ENCODE measurements at regions of chr7 and their contacts with region 1.

Region 1: DNA sequence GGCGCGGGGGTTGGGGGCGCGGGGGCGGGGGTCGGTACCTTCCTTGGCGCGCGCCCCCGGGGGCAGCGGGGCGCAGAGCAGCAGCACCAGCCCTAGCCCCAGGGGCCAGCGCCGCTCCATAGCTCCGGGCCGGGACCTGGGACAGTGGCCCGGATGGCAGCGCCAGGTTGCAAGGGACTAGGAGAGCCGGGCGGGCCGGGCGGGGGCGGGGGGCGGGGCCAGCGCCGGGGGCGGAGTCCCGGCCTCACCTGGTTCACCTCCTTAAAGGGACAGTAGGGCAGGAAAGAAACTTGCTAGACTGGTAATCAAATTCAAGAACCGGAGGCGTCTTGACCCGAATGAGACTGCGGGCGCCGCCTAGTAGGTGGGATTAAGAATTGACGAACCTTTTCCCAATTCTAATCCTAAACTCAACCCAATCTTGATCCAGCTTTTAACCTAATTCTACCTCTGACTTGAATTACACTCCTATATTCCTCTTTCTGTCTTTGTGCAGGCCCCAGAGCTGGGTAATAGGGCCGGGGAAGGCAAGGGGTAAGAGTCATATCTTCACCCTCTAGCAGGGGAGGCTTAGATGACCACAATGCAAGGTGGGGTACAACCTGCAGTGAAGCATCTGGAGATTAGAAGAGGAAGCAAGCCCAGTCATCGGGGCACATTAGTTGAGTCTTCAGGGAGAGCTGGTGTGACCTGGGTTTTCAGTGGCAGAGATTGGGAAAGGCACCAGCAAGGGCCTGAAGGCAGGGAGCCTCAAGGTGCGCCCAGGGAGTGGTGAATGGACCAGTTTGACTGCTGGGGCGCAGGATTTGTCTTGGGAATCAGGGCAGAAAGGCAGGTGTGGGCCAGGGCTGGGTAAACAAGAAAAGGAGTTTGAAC is at the start of gene EPHA1:
- DNase-seq: peak; percentile 30 to 85 (median 50)
- ATAC-seq: peak; percentile 74
- H3K4me3 ChIP-seq: peak within 1 kb of the TSS; percentile 71
- H3K4me3 Mint-ChIP-seq: peak within 1 kb of the TSS; percentile 94
- H3K27ac ChIP-seq: peak within 1 kb of the TSS; percentile 13 to 38
- H3K27ac Mint-ChIP-seq: peak within 1 kb of the TSS; percentile 85
- H3K4me1 ChIP-seq: peaks cover 55% of the 10 kb centered on the region
- H3K4me1 Mint-ChIP-seq: peaks cover 87% of the 10 kb centered on the region
- H3K27me3 ChIP-seq: no peaks in the 10 kb centered on the region
- H3K27me3 Mint-ChIP-seq: no peaks in the 10 kb centered on the region
- CTCF ChIP-seq: peak; percentile 59
- total RNA-seq, gene EPHA1: 16.0 to 19.0 TPM

Region 2: DNA sequence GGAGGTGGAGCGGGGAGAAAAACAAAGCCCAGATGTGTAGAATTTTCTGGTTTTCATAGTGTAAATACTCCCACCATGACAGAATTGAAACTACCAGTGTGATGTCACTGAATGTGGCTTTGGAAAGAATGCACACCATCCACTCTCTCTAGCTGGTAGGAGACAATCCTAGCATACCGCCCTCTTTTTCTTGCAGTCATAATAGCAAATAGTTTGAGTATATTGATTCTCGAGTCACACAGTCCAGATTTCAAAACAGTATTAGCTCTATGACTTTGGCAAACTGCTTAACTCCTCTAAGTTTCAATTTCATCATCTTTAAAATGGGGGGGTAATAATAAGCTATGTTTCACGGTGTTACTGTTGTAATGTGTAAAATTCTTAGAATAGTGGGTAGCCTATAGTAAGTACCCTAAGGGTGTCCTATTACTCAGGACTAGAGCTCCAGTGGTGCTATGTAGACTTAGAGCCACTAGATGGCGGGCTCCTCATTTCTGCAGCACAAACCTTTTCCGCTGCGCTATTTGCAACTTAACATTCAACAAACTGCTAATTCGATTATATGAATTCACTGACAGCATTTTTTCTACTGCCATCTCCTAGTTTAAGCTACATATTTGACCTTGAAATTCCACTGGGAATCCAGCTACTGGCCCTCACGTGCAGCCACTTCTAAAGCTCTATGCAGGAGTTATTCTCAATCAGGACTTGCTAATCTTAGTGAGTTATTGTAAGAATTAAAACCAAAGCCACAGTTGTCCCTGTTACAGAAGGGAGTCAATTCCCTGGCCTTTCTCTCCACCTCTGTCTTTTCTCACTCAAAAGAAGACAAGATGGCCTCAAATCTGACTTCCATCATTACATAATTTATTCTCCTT is 168.4 kb before region 1 on chr7:
- CTCF ChIA-PET with region 1: interaction called, 7 read pairs
- POLR2A ChIA-PET with region 1: interaction called, 10 read pairs
- intact Hi-C with region 1: no loop called
- DNase-seq: peak; percentile 43 to 88 (median 66)
- ATAC-seq: peak; percentile 99
- H3K4me3 ChIP-seq: no peak overlapping the region
- H3K4me3 Mint-ChIP-seq: peak overlapping the region; percentile 7
- H3K27ac ChIP-seq: no peak overlapping the region
- H3K27ac Mint-ChIP-seq: no peak overlapping the region
- H3K4me1 ChIP-seq: peaks cover 12% of the 10 kb centered on the region
- H3K4me1 Mint-ChIP-seq: peaks cover 31% of the 10 kb centered on the region
- H3K27me3 ChIP-seq: peaks cover 0 to 6% of the 10 kb centered on the region in 2 experiments
- H3K27me3 Mint-ChIP-seq: peaks cover 10% of the 10 kb centered on the region
- CTCF ChIP-seq: peak; percentile 95

Region 3: DNA sequence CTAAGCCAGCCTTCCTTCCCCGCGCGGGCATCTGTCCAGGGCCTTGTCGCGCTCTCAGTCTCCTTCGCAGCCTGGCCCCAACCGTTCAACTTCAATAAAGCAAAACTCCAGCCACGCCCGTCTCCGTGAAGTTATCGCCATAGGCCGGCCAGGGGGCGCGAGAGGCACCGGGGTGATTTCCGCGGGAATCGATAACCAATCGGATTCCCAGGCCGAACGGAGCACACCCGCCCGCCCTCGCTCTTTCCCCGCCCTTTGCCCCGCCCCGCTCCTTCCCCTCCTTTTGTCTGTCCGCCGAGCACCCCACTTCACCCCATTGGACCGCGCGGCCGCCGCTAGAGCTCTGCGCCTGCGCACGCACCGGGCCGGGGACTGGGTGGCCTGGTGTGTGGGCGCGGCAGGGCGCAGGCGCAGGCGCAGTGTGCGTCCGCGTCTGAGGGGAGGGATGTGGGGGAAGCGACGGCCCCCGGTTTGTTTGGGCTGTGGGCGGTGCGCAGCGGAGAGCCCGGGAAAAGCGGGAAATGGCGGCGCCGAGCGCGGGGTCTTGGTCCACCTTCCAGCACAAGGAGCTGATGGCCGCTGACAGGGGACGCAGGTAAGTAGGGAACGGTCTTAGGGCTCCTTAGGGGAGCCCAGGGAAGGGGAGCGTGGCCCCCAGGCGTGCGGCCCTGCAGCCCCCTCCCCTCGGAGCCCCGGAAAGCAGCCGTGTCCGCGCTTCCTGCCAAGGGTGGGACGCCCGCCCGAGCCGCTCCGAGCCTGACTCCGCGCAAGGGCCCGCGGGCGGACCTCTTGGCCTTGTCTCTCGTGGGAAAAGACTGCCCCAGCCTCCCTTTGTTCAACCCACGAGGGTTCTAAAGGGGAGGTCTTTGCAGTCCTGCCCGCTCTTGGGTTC is 120.7 kb before region 1 on chr7 and contains the start of gene CASP2:
- CTCF ChIA-PET with region 1: no interaction called
- POLR2A ChIA-PET with region 1: interaction called, 6 read pairs
- intact Hi-C with region 1: loop called in 1 of 2 experiments (anchors 5 kb)
- DNase-seq: peak; percentile 97 to 100 (median 99)
- ATAC-seq: peak; percentile 95
- H3K4me3 ChIP-seq: peak within 1 kb of the TSS; percentile 95
- H3K4me3 Mint-ChIP-seq: peak within 1 kb of the TSS; percentile 96
- H3K27ac ChIP-seq: peak within 1 kb of the TSS; percentile 68 to 76
- H3K27ac Mint-ChIP-seq: peak within 1 kb of the TSS; percentile 88
- H3K4me1 ChIP-seq: peaks cover 43% of the 10 kb centered on the region
- H3K4me1 Mint-ChIP-seq: peaks cover 65% of the 10 kb centered on the region
- H3K27me3 ChIP-seq: no peaks in the 10 kb centered on the region
- H3K27me3 Mint-ChIP-seq: no peaks in the 10 kb centered on the region
- CTCF ChIP-seq: peak; percentile 57
- total RNA-seq, gene CASP2: 19.1 to 21.9 TPM

Region 4: GRCh38 chr7:143362131-143363015 is 46.6 kb before region 1 on chr7 and contains the start of gene FAM131B:
- CTCF ChIA-PET with region 1: no interaction called
- POLR2A ChIA-PET with region 1: no interaction called
- intact Hi-C with region 1: loop called in 1 of 2 experiments (anchors 5 kb)
- DNase-seq: peak in 8 of 14 experiments; percentile 20 to 76 (median 50)
- ATAC-seq: peak; percentile 81
- H3K4me3 ChIP-seq: peak within 1 kb of the TSS; percentile 72
- H3K4me3 Mint-ChIP-seq: peak within 1 kb of the TSS; percentile 85
- H3K27ac ChIP-seq: no peak within 1 kb of the TSS
- H3K27ac Mint-ChIP-seq: no peak within 1 kb of the TSS
- H3K4me1 ChIP-seq: peaks cover 15% of the 10 kb centered on the region
- H3K4me1 Mint-ChIP-seq: peaks cover 10% of the 10 kb centered on the region
- H3K27me3 ChIP-seq: peaks cover 21 to 27% of the 10 kb centered on the region in 2 experiments
- H3K27me3 Mint-ChIP-seq: peaks cover 54% of the 10 kb centered on the region
- CTCF ChIP-seq: no peak
- total RNA-seq, gene FAM131B: 0.14 TPM in 1 of 2 experiments, not detected in the other

Region 5: DNA sequence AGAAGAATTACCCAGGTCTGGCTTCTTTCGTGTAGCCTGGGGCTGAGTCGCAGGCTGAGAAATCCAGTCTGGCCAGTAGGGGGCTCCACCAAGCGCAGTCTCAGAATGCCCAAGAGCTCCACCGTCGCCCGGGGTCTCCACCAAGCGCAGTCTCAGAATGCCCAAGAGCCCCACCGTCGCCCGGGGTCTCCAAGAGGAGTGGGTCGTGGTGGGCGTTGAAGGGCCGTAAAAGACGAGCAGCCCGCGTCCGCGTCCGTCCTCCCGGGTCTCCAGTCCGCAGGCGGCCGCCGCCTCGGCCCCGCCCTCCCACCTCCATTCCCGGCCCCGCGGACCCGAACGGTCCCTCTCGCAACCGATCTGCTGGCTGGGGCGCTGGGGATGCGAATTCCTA is 28.7 kb before region 1 on chr7:
- CTCF ChIA-PET with region 1: interaction called, 16 read pairs
- POLR2A ChIA-PET with region 1: interaction called, 57 read pairs
- intact Hi-C with region 1: loop called (anchors 1 to 2 kb)
- DNase-seq: peak; percentile 79 to 95 (median 88)
- ATAC-seq: peak; percentile 58
- H3K4me3 ChIP-seq: peak overlapping the region; percentile 87
- H3K4me3 Mint-ChIP-seq: peak overlapping the region; percentile 95
- H3K27ac ChIP-seq: peak overlapping the region; percentile 91 to 97
- H3K27ac Mint-ChIP-seq: peak overlapping the region; percentile 98
- H3K4me1 ChIP-seq: peaks cover 77% of the 10 kb centered on the region
- H3K4me1 Mint-ChIP-seq: peaks cover 42% of the 10 kb centered on the region
- H3K27me3 ChIP-seq: no peaks in the 10 kb centered on the region
- H3K27me3 Mint-ChIP-seq: no peaks in the 10 kb centered on the region
- CTCF ChIP-seq: peak; percentile 79

Region 6: GRCh38 chr7:143391462-143392404 is 17.2 kb before region 1 on chr7:
- CTCF ChIA-PET with region 1: no interaction called
- POLR2A ChIA-PET with region 1: interaction called, 31 read pairs
- intact Hi-C with region 1: no loop called
- DNase-seq: no peak
- ATAC-seq: no peak
- H3K4me3 ChIP-seq: no peak overlapping the region
- H3K4me3 Mint-ChIP-seq: no peak overlapping the region
- H3K27ac ChIP-seq: no peak overlapping the region
- H3K27ac Mint-ChIP-seq: peak overlapping the region; percentile 14
- H3K4me1 ChIP-seq: peaks cover 28% of the 10 kb centered on the region
- H3K4me1 Mint-ChIP-seq: peaks cover 19% of the 10 kb centered on the region
- H3K27me3 ChIP-seq: no peaks in the 10 kb centered on the region
- H3K27me3 Mint-ChIP-seq: no peaks in the 10 kb centered on the region
- CTCF ChIP-seq: no peak

Region 7: DNA sequence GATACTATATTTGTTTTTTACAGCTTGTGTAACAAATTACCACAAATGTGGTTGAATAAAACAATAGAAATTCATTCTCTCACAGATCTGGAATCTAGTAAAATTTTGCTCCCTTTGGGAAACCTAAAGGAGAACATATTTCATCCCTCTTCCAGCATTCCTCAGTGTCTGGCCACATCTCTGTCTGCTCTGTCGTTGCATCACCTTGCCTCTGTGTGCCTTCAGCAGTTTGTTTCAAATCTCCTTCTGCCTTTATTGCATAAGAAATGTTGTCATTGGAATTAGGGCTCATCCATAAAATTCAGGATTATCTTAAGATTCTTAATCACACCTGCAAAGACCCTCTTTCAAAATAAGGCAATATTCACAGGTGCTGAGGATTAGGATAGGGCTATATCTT is 728.6 kb after region 1 on chr7:
- CTCF ChIA-PET with region 1: no interaction called
- POLR2A ChIA-PET with region 1: no interaction called
- intact Hi-C with region 1: no loop called
- DNase-seq: no peak
- ATAC-seq: no peak
- H3K4me3 ChIP-seq: no peak overlapping the region
- H3K4me3 Mint-ChIP-seq: no peak overlapping the region
- H3K27ac ChIP-seq: no peak overlapping the region
- H3K27ac Mint-ChIP-seq: no peak overlapping the region
- H3K4me1 ChIP-seq: no peaks in the 10 kb centered on the region
- H3K4me1 Mint-ChIP-seq: no peaks in the 10 kb centered on the region
- H3K27me3 ChIP-seq: no peaks in the 10 kb centered on the region
- H3K27me3 Mint-ChIP-seq: no peaks in the 10 kb centered on the region
- CTCF ChIP-seq: no peak